ENCODE measurements at regions of chr1 and their contacts with region 1.

Region 1: DNA sequence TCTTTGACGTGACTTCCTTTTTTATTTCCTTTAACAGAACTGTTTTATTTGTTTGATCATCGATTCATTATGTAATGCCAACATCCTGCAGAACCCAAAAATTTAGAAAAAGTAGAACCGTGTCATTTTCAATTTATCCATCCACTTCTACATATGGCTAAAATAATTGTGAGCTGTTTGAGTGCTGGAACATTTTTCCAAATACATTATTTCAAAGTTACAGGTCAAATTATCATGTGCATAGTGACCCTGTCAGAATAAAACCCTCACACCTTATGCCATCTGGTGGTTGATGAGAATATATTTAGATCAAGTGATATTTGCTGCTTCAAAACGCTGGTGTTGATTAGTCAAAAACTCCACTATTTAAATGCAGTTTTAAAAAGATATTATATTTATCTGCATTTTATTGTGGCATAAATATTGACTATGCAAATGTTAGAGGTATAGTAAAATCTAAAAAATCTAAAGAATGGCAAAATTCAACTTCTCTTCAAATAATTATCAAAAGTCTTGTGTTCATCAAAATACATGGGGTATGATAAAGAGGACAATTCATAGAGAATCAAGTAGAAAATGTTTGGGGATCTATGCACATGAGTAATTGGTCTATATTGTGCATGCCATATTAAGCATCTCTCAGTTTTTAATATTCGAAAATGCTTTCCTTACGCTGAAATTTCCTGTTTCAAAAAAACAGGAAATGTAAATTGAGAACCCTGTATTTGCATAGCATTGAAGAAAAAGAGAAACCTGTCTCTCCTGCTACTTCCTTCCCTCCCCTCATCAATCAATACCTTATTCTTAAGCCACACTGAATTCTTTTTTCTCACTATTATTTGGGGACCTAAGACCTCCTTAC is 39.7 kb downstream of the UBE2U start:
- DNase-seq: no peak
- H3K4me3 ChIP-seq: peak overlapping the region in 1 of 4 experiments; percentile 10; a peak in 1 of 8 replicates
- H3K27ac ChIP-seq: no peak overlapping the region
- H3K4me1 ChIP-seq: peaks cover 6 to 15% (median 11%) of the 10 kb centered on the region in 4 experiments; a peak in 5 of 7 replicates
- H3K27me3 ChIP-seq: no peaks in the 10 kb centered on the region
- CTCF ChIP-seq: peak in 2 of 3 experiments; percentile 33 to 39; a peak in 2 of 4 replicates
- EP300 ChIP-seq: no peak
- POLR2A ChIP-seq: no peak
- RAD21 ChIP-seq: peak; percentile 70 to 74

Region 2: DNA sequence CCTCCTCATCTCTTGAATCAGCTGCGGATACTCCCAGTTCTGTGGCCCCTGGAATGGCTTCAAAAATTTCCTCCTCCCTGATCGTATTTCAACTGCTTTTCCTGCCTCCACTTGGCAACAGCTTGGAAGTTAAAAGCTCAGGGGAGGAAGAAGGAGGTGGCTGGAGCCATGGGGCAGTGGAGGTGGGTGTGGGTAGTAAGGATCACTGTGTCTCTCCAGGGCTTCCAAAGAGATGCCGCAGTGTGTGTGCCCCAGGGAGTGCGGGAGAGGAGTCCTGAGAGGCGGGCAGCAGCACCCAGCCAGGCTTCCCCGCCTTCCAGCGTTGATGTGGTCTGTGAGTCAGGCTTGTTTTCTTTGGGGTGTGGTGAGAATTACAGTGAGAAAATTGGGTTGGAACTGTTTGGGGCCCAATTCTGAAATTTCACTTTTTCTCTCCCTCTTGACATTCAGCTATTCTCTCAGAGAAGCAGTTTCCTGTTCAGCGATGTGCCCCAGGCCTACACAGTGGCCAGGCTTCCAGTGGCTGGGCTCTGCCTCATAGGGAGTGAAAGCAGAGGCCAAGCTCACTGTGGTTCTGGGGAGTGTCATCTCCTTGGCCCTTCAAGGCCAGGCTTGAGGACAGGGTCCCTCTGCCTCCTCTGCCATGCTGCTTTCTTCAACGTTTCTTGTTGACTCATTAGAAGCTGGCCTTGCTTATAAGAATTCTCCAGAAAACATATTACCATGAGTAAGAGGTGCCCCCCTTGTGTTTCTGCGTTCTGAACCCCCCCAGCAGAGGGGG is 580.9 kb before region 1 on chr1:
- CTCF ChIA-PET with region 1: interaction called, 19 read pairs
- POLR2A ChIA-PET with region 1: no interaction called
- DNase-seq: no peak
- H3K4me3 ChIP-seq: no peak overlapping the region
- H3K27ac ChIP-seq: no peak overlapping the region
- H3K4me1 ChIP-seq: 0 out of 7 replicates have a peak, but pooled peaks cover 0 to 2% (median 0%) of the 10 kb centered on the region in 4 experiments
- H3K27me3 ChIP-seq: no peaks in the 10 kb centered on the region
- CTCF ChIP-seq: no peak
- EP300 ChIP-seq: no peak
- POLR2A ChIP-seq: no peak
- RAD21 ChIP-seq: no peak

Region 3: DNA sequence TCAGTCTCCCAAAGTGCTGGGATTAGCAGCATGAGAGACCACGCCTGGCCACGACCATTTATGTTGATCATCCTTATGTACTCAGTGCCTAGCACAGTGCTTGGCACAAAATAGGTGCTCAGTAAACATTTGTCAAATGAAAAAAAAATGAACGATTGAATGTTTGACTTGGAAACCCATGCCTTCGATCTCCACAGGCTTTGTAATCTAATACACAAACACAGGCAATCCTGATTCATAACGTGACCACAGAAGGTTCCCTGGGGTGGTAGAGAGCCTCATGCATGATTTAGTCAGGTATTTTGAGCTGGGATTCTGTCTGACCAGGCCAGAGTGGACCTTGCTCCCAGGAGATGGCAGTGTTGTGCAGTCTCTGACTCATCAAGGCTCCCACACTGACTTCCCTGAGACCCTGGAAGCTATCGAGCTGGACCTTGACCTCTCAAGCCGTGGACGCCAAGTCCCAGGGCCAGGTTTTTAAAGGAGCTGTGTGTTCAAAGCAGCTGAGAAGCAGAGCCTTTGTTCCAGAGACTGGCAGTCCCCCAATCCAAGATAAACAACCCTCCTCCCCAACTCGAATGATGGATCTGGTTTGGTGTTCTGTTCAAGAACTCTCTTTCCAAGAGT is 568.8 kb before region 1 on chr1:
- CTCF ChIA-PET with region 1: interaction called, 55 read pairs
- POLR2A ChIA-PET with region 1: interaction called, 4 read pairs
- DNase-seq: peak; percentile 54 to 79
- H3K4me3 ChIP-seq: no peak overlapping the region
- H3K27ac ChIP-seq: no peak overlapping the region
- H3K4me1 ChIP-seq: peaks cover 0 to 3% (median 0%) of the 10 kb centered on the region in 4 experiments; a peak in 2 of 7 replicates
- H3K27me3 ChIP-seq: 0 out of 7 replicates have a peak, but pooled peaks cover 0 to 2% (median 0%) of the 10 kb centered on the region in 4 experiments
- CTCF ChIP-seq: peak; percentile 83 to 96 (median 88)
- EP300 ChIP-seq: no peak
- POLR2A ChIP-seq: no peak
- RAD21 ChIP-seq: peak; percentile 97 to 98

Region 4: GRCh38 chr1:64965366-64966157 is 722.4 kb after region 1 on chr1:
- CTCF ChIA-PET with region 1: no interaction called
- POLR2A ChIA-PET with region 1: no interaction called
- DNase-seq: peak in 1 of 2 experiments; percentile 74
- H3K4me3 ChIP-seq: peak overlapping the region; percentile 74 to 93 (median 82)
- H3K27ac ChIP-seq: no peak overlapping the region
- H3K4me1 ChIP-seq: peaks cover 0 to 8% (median 5%) of the 10 kb centered on the region in 4 experiments; a peak in 4 of 7 replicates
- H3K27me3 ChIP-seq: peaks cover 0 to 19% (median 3%) of the 10 kb centered on the region in 4 experiments; a peak in 5 of 7 replicates
- CTCF ChIP-seq: no peak
- EP300 ChIP-seq: no peak
- POLR2A ChIP-seq: no peak
- RAD21 ChIP-seq: no peak

Measured in H1 (cell line).